ENCODE measurements at regions of chr3 and their contacts with region 1.

Region 1: GRCh38 chr3:136752422-136753325 is 496 bp upstream of the STAG1 start:
- DNase-seq: peak; percentile 99
- ATAC-seq: peak; percentile 87
- H3K4me3 Mint-ChIP-seq: peak overlapping the region; percentile 82
- H3K27ac Mint-ChIP-seq: peak overlapping the region; percentile 97
- H3K4me1 Mint-ChIP-seq: peaks cover 33% of the 10 kb centered on the region
- H3K27me3 Mint-ChIP-seq: no peaks in the 10 kb centered on the region
- CTCF ChIP-seq: no peak

Region 2: DNA sequence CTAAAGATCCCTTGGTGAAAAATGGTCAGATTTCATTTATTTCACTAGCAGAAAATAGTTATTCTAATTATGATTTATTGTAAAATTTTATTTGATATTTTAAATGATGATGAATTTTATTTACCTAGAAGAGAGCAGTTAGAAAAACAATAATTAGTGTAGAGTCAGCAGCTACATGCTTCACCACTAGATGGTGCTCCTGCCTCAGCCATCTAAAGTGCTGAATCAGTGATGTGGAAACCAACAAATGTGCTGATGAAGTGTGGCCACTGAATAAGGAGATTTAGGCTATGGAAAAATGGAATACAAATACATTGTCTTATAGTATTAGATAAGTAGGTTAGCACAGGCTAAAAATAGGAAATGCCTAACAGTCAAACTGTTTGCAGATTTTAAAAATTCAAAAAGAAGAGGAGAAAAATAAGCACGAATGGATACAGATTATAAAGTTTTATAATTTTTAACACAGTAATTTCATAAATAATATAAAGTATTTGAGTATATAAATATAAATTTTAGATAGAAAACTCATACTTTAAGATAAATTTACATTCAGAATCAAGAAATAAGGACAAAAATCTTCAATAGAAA is 677.4 kb before region 1 on chr3:
- CTCF ChIA-PET with region 1: interaction called, 20 read pairs
- POLR2A ChIA-PET with region 1: no interaction called
- intact Hi-C with region 1: loop called (anchors 5 kb)
- DNase-seq: peak; percentile 80
- ATAC-seq: peak; percentile 53
- H3K4me3 Mint-ChIP-seq: no peak overlapping the region
- H3K27ac Mint-ChIP-seq: no peak overlapping the region
- H3K4me1 Mint-ChIP-seq: no peaks in the 10 kb centered on the region
- H3K27me3 Mint-ChIP-seq: no peaks in the 10 kb centered on the region
- CTCF ChIP-seq: peak; percentile 88

Region 3: GRCh38 chr3:136305878-136306277 is 446.8 kb before region 1 on chr3:
- CTCF ChIA-PET with region 1: interaction called, 15 read pairs
- POLR2A ChIA-PET with region 1: no interaction called
- intact Hi-C with region 1: no loop called
- DNase-seq: no peak
- ATAC-seq: peak; percentile 66
- H3K4me3 Mint-ChIP-seq: no peak overlapping the region
- H3K27ac Mint-ChIP-seq: no peak overlapping the region
- H3K4me1 Mint-ChIP-seq: no peaks in the 10 kb centered on the region
- H3K27me3 Mint-ChIP-seq: no peaks in the 10 kb centered on the region
- CTCF ChIP-seq: no peak

Region 4: GRCh38 chr3:136390574-136390973 is 362.1 kb before region 1 on chr3:
- CTCF ChIA-PET with region 1: interaction called, 30 read pairs
- POLR2A ChIA-PET with region 1: interaction called, 7 read pairs
- intact Hi-C with region 1: loop called (anchors 5 kb)
- DNase-seq: no peak
- ATAC-seq: no peak
- H3K4me3 Mint-ChIP-seq: no peak overlapping the region
- H3K27ac Mint-ChIP-seq: no peak overlapping the region
- H3K4me1 Mint-ChIP-seq: no peaks in the 10 kb centered on the region
- H3K27me3 Mint-ChIP-seq: no peaks in the 10 kb centered on the region
- CTCF ChIP-seq: no peak

Region 5: DNA sequence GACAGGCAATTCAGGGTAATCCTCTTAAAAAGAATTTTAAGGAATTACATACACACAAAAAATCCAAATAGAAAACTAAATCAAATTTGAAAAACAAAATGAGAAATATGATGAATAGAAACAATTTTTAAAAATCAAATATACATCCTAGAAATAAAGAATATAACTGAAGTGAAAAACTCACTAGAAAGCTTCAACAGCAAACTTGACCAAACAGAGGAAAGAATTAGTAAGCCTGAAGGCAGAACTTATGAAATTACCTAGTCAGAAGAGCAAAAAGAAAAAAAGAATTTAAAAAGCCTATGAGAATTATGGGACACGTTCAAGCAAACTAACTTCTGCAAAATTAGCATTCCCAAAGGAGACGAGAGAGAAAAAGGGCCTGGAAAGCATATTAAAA is 296.5 kb before region 1 on chr3:
- CTCF ChIA-PET with region 1: no interaction called
- POLR2A ChIA-PET with region 1: no interaction called
- intact Hi-C with region 1: no loop called
- DNase-seq: no peak
- ATAC-seq: no peak
- H3K4me3 Mint-ChIP-seq: no peak overlapping the region
- H3K27ac Mint-ChIP-seq: no peak overlapping the region
- H3K4me1 Mint-ChIP-seq: no peaks in the 10 kb centered on the region
- H3K27me3 Mint-ChIP-seq: no peaks in the 10 kb centered on the region
- CTCF ChIP-seq: no peak

Region 6: GRCh38 chr3:136772709-136773108 is 20.0 kb after region 1 on chr3:
- CTCF ChIA-PET with region 1: no interaction called
- POLR2A ChIA-PET with region 1: no interaction called
- intact Hi-C with region 1: no loop called
- DNase-seq: no peak
- ATAC-seq: no peak
- H3K4me3 Mint-ChIP-seq: no peak overlapping the region
- H3K27ac Mint-ChIP-seq: no peak overlapping the region
- H3K4me1 Mint-ChIP-seq: no peaks in the 10 kb centered on the region
- H3K27me3 Mint-ChIP-seq: no peaks in the 10 kb centered on the region
- CTCF ChIP-seq: no peak

Region 7: DNA sequence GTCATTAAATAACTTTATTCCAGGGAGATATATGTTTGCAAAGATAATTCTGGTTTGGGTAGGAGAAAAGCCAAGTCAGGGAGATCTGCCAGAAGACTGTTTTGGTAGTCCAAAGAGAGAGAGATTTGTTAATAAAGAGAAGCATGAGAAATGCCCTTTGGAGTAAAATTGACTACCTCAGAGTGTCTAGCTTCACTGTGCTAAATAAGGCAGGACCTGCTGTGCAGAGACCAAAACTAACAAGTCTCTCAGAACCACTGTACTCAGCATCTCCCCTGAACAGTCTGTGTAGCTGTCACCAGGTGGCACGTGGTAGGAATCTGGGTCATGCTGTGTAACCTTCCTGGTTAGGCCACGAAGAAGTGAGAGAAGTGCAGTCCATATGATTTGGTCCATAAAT is 34.7 kb after region 1 on chr3:
- CTCF ChIA-PET with region 1: no interaction called
- POLR2A ChIA-PET with region 1: no interaction called
- intact Hi-C with region 1: no loop called
- DNase-seq: peak; percentile 46
- ATAC-seq: peak; percentile 83
- H3K4me3 Mint-ChIP-seq: no peak overlapping the region
- H3K27ac Mint-ChIP-seq: peak overlapping the region; percentile 30
- H3K4me1 Mint-ChIP-seq: peaks cover 14% of the 10 kb centered on the region
- H3K27me3 Mint-ChIP-seq: no peaks in the 10 kb centered on the region
- CTCF ChIP-seq: no peak

Region 8: GRCh38 chr3:136818769-136819391 is 66.2 kb after region 1 on chr3 and contains the start of gene SLC35G2:
- CTCF ChIA-PET with region 1: interaction called, 4 read pairs
- POLR2A ChIA-PET with region 1: interaction called, 4 read pairs
- intact Hi-C with region 1: loop called (anchors 2 kb)
- DNase-seq: peak; percentile 69
- ATAC-seq: peak; percentile 52
- H3K4me3 Mint-ChIP-seq: peak within 1 kb of the TSS; percentile 81
- H3K27ac Mint-ChIP-seq: peak within 1 kb of the TSS; percentile 82
- H3K4me1 Mint-ChIP-seq: peaks cover 24% of the 10 kb centered on the region
- H3K27me3 Mint-ChIP-seq: peaks cover 27% of the 10 kb centered on the region
- CTCF ChIP-seq: no peak
- total RNA-seq, gene SLC35G2: 3.0 TPM

Region 9: GRCh38 chr3:137013955-137014688 is 261.4 kb after region 1 on chr3:
- CTCF ChIA-PET with region 1: interaction called, 167 read pairs
- POLR2A ChIA-PET with region 1: interaction called, 17 read pairs
- intact Hi-C with region 1: no loop called
- DNase-seq: peak; percentile 85
- ATAC-seq: peak; percentile 88
- H3K4me3 Mint-ChIP-seq: peak overlapping the region; percentile 63
- H3K27ac Mint-ChIP-seq: peak overlapping the region; percentile 70
- H3K4me1 Mint-ChIP-seq: peaks cover 8% of the 10 kb centered on the region
- H3K27me3 Mint-ChIP-seq: no peaks in the 10 kb centered on the region
- CTCF ChIP-seq: peak; percentile 85

Region 10: DNA sequence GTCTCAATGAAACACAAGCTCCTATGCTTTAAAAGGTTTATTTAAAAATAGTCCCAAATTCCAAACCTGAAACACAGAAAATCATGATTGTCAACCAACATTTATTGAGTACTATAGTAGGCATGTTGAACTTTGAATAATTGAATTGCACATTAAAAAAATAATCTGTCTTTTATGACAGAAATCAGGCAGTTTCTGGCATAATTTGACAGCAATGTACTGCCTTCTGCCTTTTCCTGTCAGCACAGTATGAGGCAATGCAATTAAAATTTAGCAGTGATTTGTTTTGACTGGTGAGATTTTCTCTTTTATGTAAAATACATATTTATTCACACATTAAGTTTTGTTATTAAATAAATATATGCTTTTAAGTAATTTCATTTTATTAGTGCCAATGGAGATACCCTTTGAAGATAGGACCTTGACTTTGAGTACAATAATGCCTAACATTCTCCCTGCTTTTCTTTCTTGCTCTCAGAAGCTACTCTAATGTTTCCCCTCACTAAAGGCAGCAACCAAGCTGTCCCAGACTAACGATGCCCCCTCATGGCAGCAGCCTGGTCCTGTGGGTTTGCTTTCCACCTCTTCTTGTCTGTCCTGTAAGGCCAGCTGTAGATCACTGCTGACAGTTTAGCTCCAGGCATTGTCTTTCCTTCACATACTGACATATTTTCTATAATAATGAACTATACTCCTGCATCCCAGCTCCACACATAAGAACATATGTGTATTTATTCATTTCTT is 551.8 kb after region 1 on chr3:
- CTCF ChIA-PET with region 1: no interaction called
- POLR2A ChIA-PET with region 1: no interaction called
- intact Hi-C with region 1: no loop called
- DNase-seq: peak; percentile 4
- ATAC-seq: no peak
- H3K4me3 Mint-ChIP-seq: no peak overlapping the region
- H3K27ac Mint-ChIP-seq: no peak overlapping the region
- H3K4me1 Mint-ChIP-seq: no peaks in the 10 kb centered on the region
- H3K27me3 Mint-ChIP-seq: no peaks in the 10 kb centered on the region
- CTCF ChIP-seq: no peak